Sigmoid colon (tissue), 7 donors: ENCODE measurements at regions of chr1 and their contacts with region 1.

Region 1: DNA sequence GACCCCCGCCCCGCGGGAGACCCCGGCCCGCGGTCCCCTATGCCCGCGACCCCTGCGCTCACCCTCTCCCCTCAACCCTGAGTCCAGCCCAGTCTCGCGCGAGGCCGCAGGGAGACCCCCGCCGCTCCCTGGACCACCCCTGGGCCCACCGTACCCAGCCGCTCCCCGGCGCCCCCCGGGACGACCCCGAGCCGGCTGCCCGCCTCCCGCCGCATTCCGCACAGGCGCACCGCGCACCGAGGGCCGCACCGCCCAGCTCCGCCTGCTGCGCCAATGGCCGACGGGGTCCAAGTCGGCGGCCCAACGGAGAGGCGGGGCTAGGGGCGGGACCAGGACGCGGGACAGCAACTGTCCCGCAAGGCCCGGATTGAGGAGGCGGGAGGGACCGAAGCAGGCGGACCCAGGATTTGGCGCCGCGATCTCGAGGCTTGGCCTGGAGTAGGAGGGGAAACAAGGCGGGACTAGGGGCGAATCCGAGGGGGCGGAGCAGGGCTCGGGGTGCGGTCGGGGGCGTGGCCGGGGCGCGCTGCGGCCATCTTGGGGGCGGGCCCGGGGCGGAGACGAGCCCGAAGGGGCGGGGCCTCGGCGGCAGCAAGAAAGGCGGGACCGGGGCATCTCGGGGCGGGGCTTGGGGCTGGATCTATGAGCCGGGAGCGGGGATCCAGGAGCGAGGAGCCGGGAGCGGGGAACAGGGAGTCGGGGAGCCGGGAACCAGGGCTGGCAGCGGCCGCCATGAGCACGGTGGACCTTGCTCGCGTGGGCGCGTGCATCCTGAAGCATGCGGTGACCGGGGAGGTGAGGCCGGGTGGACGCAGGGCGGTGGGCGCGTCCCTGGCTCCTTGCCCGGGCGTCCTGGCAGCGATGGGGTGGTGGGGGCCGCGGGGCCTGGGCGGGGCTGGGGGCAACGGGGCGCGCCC is at the start of gene PRXL2B:
- DNase-seq: peak; percentile 100
- H3K4me3 ChIP-seq: peak within 1 kb of the TSS; percentile 91 to 96 (median 94)
- H3K27ac ChIP-seq: peak within 1 kb of the TSS; percentile 99 to 100 (median 100)
- H3K4me1 ChIP-seq: peaks cover 0 to 40% (median 33%) of the 10 kb centered on the region in 4 donors
- H3K27me3 ChIP-seq: no peaks in the 10 kb centered on the region
- CTCF ChIP-seq: no peak
- EP300 ChIP-seq: no peak
- POLR2A ChIP-seq: peak in 1 of 2 donors; percentile 50
- total RNA-seq, gene PRXL2B: 8.6 to 18.2 (median 15.3) TPM

Region 2: GRCh38 chr1:2194898-2195673 is 391.3 kb before region 1 on chr1:
- intact Hi-C with region 1: loop called (anchors 5 kb)
- DNase-seq: peak; percentile 97
- H3K4me3 ChIP-seq: peak overlapping the region; percentile 54 to 74 (median 69)
- H3K27ac ChIP-seq: peak overlapping the region; percentile 94 to 99 (median 96)
- H3K4me1 ChIP-seq: peaks cover 0 to 70% (median 66%) of the 10 kb centered on the region in 4 donors
- H3K27me3 ChIP-seq: no peaks in the 10 kb centered on the region
- CTCF ChIP-seq: peak; percentile 88 to 99 (median 96)
- EP300 ChIP-seq: peak in 1 of 4 donors; percentile 15
- POLR2A ChIP-seq: peak in 1 of 2 donors; percentile 41

Region 3: GRCh38 chr1:2525920-2526823 is 60.2 kb before region 1 on chr1 and contains the start of gene PANK4:
- intact Hi-C with region 1: loop called (anchors 1 kb)
- DNase-seq: peak; percentile 96
- H3K4me3 ChIP-seq: peak within 1 kb of the TSS; percentile 58 to 96 (median 90)
- H3K27ac ChIP-seq: peak within 1 kb of the TSS; percentile 70 to 83 (median 80)
- H3K4me1 ChIP-seq: peaks cover 0 to 67% (median 65%) of the 10 kb centered on the region in 4 donors
- H3K27me3 ChIP-seq: peaks cover 21 to 35% (median 30%) of the 10 kb centered on the region in 3 donors
- CTCF ChIP-seq: no peak
- EP300 ChIP-seq: no peak
- POLR2A ChIP-seq: peak; percentile 27 to 56
- total RNA-seq, gene PANK4: 23.6 to 37.7 (median 27.9) TPM

Region 4: DNA sequence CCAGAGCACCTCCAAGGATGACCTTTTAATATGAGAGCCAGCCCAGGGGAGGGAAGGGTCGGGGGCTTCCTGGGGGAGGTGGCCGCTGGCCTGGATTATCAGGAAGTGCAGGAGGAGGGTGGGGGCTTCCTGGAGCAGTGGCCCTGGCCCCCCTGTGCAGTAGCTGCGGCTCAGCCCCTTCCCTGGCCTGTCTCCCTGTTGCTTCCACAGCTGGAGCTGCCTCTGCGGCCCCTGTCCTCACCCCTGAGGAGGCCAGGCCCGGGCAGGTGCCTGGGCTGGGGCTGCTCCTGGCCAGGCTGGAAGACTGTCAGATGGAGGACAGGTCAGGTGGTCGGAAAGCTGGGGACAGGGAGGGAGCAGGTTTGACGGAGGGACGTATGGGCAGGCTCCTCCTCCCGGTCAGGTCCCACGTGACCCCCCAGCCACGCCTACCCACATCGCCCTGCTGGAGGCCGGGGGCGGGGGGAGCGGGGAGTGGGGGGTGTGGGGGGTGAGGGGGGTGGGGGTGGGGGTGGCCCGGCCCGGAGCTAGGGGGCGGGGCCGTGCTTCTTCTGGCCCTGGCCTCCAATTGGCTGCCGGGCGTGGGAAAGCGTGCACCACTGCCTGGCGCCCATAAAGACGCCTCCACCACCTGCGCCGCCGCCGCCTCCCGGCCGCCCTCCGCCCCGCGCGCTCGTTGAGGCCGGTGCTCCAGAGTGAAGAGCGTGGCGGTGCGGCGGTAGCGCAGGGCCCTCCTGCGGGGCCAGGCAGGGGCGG is 40.5 kb before region 1 on chr1:
- intact Hi-C with region 1: loop called (anchors 5 kb)
- DNase-seq: peak; percentile 96
- H3K4me3 ChIP-seq: peak overlapping the region; percentile 36 to 52 (median 48)
- H3K27ac ChIP-seq: peak overlapping the region; percentile 79 to 94 (median 82)
- H3K4me1 ChIP-seq: peaks cover 0 to 61% (median 46%) of the 10 kb centered on the region in 4 donors
- H3K27me3 ChIP-seq: peaks cover 19 to 68% (median 53%) of the 10 kb centered on the region in 3 donors
- CTCF ChIP-seq: no peak
- EP300 ChIP-seq: no peak
- POLR2A ChIP-seq: peak in 1 of 2 donors; percentile 39

Region 5: GRCh38 chr1:2556277-2556677 is 30.1 kb before region 1 on chr1 and contains the start of gene TNFRSF14:
- intact Hi-C with region 1: loop called (anchors 2 kb)
- DNase-seq: peak; percentile 87
- H3K4me3 ChIP-seq: peak within 1 kb of the TSS; percentile 57 to 68 (median 64)
- H3K27ac ChIP-seq: peak within 1 kb of the TSS; percentile 83 to 91 (median 89)
- H3K4me1 ChIP-seq: peaks cover 0 to 35% (median 34%) of the 10 kb centered on the region in 4 donors
- H3K27me3 ChIP-seq: peaks cover 0 to 5% (median 0%) of the 10 kb centered on the region in 3 donors
- CTCF ChIP-seq: peak in 1 of 4 experiments; percentile 18
- EP300 ChIP-seq: no peak
- POLR2A ChIP-seq: peak in 1 of 2 donors; percentile 26
- total RNA-seq, gene TNFRSF14: 37.5 to 73.4 (median 60.4) TPM

Region 6: DNA sequence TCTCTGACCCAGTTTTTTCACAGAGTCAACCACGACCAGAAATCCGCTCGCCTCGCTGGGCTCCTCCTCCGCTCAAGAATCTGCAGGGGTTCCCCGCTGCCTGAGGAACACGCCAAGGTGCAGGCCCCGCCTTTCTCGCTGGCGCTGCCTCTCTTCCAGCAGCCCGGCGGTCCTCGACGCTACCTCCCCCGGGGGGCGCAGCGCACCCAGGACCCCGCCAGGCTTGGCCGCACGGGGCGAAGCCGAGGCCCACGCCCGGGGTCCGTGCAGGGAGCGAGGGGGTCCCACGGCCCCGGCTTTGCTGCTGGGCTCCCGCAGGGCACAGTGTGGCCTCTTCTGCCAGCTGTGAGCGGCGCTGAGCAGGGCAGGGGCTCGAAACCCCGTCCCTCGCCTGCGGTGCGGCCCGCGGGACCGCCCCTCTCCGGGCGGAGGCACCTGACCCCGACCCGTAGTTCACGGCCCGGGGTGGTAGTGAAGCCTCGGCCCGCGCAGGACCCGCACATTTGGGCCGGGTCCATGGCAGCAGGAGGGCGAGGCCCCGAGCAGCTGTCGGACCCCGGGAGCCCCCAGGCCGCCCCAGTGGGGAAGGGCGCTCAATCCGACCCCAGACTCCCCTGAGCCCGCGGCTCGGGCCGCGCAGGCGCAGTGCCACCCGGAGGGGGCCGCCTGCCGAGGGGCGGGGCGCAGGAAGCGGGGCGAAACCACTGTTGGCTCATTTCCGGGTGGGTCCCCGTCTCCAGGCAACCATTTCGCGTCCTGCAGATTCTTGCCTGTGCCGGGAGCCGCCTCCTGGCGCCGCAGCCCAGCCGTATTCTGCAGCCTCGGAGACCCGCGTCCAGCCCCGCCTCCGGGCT is 56.4 kb after region 1 on chr1:
- intact Hi-C with region 1: loop called (anchors 1 kb)
- DNase-seq: peak; percentile 96
- H3K4me3 ChIP-seq: peak overlapping the region; percentile 67 to 95 (median 88)
- H3K27ac ChIP-seq: peak overlapping the region; percentile 81 to 84 (median 82)
- H3K4me1 ChIP-seq: peaks cover 0 to 26% (median 21%) of the 10 kb centered on the region in 4 donors
- H3K27me3 ChIP-seq: peaks cover 0 to 2% (median 0%) of the 10 kb centered on the region in 3 donors
- CTCF ChIP-seq: no peak
- EP300 ChIP-seq: no peak
- POLR2A ChIP-seq: peak; percentile 63 to 67